Mammary epithelial cell (primary cell): ENCODE measurements at regions of chr19 and their contacts with region 1.

Region 1: DNA sequence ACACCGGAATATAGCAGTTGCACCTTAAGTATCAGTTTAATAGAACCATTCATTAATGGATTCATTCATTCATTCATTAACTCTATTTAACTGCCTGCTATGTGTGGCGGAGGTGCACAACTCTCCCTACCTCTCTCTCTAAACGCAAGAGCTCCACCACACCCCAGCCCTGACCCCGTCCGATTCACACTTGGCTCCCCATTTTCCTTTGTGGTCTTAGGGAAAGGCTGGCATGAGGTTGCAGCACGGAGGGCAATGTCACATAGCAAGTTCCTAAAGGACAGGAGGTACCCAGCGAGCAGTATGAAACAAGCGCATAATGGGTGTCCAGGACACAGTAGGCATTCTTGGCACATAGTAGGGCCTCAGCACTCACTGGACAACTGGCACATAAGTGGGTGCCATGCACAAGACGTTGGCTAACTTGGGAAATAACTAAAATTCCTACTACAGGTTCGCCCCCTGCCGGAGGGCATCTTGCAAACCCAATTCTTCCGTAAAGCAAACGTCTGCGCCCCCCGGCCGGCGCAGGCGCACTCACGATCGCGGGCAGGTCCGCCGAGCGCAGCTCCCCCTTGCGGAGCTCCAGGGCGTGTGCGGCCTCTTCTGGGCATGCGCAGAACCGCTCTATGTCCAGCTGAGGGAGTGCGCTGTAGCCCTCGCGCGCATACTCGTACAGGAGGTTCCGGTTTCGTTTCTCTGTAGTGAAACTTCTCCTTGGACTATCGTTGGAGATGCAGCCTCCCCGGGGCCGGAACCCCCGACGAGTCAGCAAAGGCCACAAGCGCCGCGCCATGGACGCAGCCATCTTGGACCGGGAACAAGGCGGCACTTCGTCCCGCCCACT is at the start of gene SARS2:
- DNase-seq: peak; percentile 84
- H3K4me3 ChIP-seq: peak within 1 kb of the TSS; percentile 84 to 90 (median 86)
- H3K27ac ChIP-seq: peak within 1 kb of the TSS; percentile 82
- H3K4me1 ChIP-seq: peaks cover 12% of the 10 kb centered on the region
- H3K27me3 ChIP-seq: no peaks in the 10 kb centered on the region
- CTCF ChIP-seq: peak; percentile 88 to 96
- total RNA-seq, gene SARS2: 18.0 to 28.0 TPM

Region 2: DNA sequence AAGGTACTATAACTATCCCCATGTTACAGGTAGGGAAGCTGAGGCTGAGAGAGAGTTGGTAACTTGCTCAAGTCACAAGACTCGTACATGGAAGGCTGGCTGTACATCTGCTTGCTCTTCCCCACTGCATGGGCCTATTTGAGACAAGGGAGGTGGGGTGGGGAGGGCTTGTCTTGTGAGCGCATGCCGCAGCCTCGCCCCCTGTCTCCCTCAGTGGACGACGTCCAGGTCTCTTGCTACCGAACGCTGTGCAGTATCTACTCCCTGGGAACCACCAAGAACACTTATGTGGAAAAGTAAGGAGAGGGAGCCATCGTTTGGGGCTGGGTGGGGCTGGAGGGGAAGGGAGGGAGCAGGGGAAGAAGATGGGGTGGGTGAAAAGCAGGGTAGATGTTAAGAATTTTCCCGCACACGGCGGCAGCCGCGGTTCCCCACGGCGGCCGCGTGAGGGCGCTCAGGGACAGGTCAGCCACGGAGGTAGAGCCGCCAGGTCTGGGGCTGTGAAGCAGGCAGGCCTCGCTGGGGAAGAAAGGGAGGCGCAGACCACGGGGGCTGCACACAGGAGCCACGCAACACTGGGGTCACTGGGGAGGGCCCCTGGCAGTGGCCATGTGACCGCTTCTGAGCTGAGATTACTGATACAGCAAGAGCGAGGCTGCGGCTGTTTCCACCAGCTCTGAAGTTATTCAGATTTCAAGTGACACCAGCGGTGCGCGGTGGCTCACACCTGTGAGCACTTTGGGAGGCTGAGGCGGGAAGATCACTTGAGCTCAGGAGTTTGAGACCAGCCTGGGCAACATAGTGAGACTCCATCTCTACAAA is 415.1 kb before region 1 on chr19:
- CTCF ChIA-PET with region 1: no interaction called
- dilution Hi-C with region 1: no loop called
- in situ Hi-C with region 1: loop called in 1 of 2 experiments (anchors 25 kb)
- intact Hi-C with region 1: loop called (anchors 1 kb)
- DNase-seq: peak; percentile 45
- H3K4me3 ChIP-seq: peak overlapping the region in 1 of 3 experiments; percentile 4
- H3K27ac ChIP-seq: no peak overlapping the region
- H3K4me1 ChIP-seq: no peaks in the 10 kb centered on the region
- H3K27me3 ChIP-seq: no peaks in the 10 kb centered on the region
- CTCF ChIP-seq: peak; percentile 62 to 90

Region 3: DNA sequence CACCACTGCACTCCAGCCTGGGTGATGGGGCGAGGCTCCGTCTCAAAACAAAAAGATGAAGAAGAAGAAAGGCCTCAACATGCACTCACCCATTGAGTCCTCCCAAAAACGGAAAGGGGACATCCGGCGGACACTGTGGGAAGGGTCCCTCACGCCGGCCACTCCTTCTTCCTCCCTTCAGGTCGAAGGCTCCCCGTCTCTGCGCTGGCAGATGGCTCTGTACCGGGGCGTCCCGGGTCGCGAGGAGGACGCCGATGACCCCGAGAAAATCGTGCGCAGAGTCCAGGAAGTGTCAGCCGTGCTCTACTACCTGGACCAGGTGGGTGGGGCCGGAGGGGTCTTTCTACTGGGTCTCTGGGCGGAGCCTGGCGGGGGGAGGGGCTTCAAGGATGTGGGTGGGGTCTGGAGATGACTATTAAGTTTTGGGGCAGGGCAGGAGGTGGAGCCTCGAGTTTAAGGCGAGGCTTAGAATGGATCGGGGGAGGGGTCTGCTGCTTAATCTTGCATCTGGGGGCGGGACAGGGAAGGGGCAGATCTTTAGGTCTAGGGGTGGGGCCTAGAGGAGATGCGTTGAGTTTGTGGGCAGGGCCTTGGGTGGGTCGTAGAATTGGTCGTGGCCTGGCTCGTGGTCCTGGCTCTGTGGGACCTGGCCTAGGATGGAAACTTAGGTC is 402.6 kb before region 1 on chr19:
- CTCF ChIA-PET with region 1: no interaction called
- dilution Hi-C with region 1: loop called (anchors 5 kb)
- in situ Hi-C with region 1: loop called in 1 of 2 experiments (anchors 25 kb)
- intact Hi-C with region 1: no loop called
- DNase-seq: no peak
- H3K4me3 ChIP-seq: no peak overlapping the region
- H3K27ac ChIP-seq: no peak overlapping the region
- H3K4me1 ChIP-seq: no peaks in the 10 kb centered on the region
- H3K27me3 ChIP-seq: no peaks in the 10 kb centered on the region
- CTCF ChIP-seq: no peak

Region 4: GRCh38 chr19:38718747-38719543 is 211.2 kb before region 1 on chr19:
- CTCF ChIA-PET with region 1: no interaction called
- dilution Hi-C with region 1: no loop called
- in situ Hi-C with region 1: no loop called
- intact Hi-C with region 1: loop called (anchors 5 kb)
- DNase-seq: peak; percentile 68
- H3K4me3 ChIP-seq: no peak overlapping the region
- H3K27ac ChIP-seq: peak overlapping the region; percentile 86
- H3K4me1 ChIP-seq: peaks cover 43% of the 10 kb centered on the region
- H3K27me3 ChIP-seq: no peaks in the 10 kb centered on the region
- CTCF ChIP-seq: peak; percentile 27 to 61

Region 5: DNA sequence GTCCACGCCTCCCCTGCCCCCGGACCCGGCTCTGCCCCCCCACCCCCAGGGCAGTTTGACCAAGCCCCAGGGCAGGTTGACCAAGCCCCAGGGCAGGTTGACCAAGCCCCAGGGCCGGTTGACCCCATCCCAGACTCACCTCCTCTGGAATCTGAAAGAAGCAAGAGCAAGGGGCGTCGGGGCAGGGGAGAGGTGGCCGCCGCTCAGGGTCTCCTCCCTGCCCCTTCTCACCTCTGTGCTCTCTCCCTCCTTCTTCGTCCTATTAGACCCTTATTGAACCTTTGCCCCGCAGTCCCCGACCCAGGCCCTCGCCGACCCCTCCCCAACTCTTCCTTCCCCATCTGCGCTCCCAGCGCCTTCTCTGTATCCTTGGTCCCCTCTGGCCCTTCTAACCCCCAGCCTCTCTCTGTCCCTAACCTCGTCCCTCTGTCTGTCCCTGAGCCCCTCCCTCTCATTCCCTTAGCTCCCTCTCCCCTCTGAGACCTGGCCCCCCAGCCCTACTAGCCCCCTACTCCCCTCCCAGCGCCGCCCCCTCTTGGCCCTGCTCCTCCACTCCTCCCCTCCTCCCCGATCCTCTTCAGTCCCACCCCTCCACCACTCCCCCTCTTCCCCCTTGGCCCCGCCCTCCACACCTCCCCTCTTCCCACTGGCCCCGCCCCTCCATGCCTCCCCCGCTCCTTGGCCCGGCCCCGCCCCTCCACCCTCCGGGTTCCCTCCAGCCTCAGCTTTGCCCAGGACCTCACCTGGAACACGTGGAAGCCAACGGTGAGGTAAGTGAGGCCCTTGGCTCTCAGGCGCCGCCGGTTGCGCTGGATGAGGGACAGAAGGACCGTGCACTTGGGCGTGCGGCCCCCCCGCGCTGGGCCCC is 193.5 kb before region 1 on chr19:
- CTCF ChIA-PET with region 1: no interaction called
- dilution Hi-C with region 1: no loop called
- in situ Hi-C with region 1: no loop called
- intact Hi-C with region 1: loop called (anchors 2 kb)
- DNase-seq: peak; percentile 36
- H3K4me3 ChIP-seq: peak overlapping the region in 1 of 3 experiments; percentile 41
- H3K27ac ChIP-seq: no peak overlapping the region
- H3K4me1 ChIP-seq: peaks cover 33% of the 10 kb centered on the region
- H3K27me3 ChIP-seq: no peaks in the 10 kb centered on the region
- CTCF ChIP-seq: no peak

Region 6: DNA sequence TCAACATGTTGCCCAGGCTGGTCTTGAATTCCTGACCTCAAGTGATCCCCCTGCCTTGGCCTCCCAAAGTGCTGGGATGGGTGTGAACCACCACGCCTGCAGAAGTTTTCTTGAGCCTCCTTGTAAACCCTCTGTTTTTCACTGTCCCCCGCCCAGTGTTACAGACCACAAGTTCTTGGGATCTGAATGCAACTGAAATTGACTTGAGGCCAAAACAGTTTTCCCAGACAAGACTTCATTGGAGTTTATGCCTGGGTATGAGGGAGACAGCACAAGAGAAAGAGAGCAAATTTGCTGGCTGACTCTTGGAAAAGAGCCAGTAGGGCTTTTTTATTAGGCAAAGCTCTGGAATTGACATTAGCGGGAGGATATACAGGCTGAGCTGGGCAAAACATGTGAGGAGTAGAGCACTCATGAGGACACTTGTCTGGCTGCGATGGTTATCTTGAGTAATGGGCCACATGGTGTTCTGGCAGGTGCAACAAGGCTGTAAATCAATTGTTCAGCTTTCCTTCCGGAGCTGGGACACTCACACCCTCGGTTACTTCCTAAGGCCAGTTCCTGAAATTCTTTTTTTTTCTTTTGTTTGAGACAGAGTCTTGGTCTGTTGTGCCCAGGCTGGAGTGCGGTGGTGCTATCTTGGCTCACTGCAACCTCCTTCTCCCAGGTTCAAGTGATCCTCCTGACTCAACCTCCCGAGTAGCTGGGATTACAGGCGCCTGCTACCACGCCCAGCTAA is 67.7 kb before region 1 on chr19:
- CTCF ChIA-PET with region 1: no interaction called
- dilution Hi-C with region 1: no loop called
- in situ Hi-C with region 1: no loop called
- intact Hi-C with region 1: no loop called
- DNase-seq: no peak
- H3K4me3 ChIP-seq: no peak overlapping the region
- H3K27ac ChIP-seq: no peak overlapping the region
- H3K4me1 ChIP-seq: no peaks in the 10 kb centered on the region
- H3K27me3 ChIP-seq: no peaks in the 10 kb centered on the region
- CTCF ChIP-seq: no peak

Region 7: DNA sequence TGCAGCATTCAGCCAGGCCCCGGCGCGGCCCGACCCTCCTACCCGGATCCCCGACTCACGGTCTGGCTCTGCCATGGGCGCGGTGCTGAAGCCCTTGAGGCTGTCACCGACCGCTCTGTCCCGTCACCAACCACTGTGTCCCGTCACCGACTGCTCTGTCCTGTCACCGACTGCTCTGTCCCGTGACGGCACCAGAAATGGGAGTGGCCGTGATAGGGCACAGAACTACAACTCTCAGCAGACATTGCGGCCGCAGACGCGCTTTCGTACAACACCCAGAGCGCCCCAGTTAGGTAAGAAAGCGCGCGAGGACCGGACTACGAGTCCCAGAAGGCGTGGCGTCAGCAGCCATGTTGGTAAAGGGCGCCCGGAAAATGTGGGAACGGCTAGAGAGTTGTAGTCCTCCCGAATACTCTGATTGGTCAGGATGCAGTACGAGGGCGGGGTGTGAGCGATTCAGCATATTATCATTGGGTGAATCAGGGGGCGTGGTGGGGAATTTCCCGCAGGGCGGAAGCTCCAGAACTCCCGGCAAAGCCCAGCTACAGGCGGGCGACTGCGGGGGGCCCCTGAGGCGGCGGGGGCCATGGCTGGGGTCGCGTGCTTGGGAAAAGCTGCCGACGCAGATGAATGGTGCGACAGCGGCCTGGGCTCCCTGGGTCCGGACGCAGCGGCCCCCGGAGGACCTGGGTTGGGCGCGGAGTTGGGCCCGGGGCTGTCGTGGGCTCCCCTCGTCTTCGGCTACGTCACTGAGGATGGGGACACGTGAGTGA is 30.5 kb before region 1 on chr19 and contains the starts of genes NFKBIB and SIRT2:
- CTCF ChIA-PET with region 1: interaction called, 3 read pairs
- dilution Hi-C with region 1: no loop called
- in situ Hi-C with region 1: no loop called
- intact Hi-C with region 1: loop called (anchors 1 kb)
- DNase-seq: peak; percentile 100
- H3K4me3 ChIP-seq: peak within 1 kb of the TSS; percentile 84 to 93 (median 93)
- H3K27ac ChIP-seq: peak within 1 kb of the TSS; percentile 96
- H3K4me1 ChIP-seq: peaks cover 13% of the 10 kb centered on the region
- H3K27me3 ChIP-seq: no peaks in the 10 kb centered on the region
- CTCF ChIP-seq: no peak
- total RNA-seq, gene NFKBIB: 9.5 to 27.2 TPM
- total RNA-seq, gene SIRT2: 43.3 to 65.3 TPM

Region 8: DNA sequence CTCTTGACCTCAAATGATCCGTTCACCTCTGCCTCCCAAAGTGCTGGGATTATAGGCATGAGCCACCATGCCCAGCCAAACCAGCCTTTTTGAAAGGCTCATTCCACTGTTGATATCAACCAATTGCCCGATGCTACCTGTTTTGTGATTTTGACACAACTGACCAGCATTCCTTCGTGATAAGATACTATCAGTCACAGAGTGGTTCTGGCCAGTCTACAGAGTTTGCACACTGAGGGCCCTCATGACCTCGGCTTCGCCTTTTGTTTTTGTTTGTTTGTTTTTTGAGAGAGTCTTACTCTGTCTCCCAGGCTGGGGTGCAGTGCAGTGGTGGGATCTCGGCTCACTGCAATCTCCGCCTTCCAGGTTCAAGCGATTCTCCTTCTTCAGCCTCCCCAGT is 64.5 kb after region 1 on chr19:
- CTCF ChIA-PET with region 1: no interaction called
- dilution Hi-C with region 1: loop called (anchors 5 kb)
- in situ Hi-C with region 1: no loop called
- intact Hi-C with region 1: no loop called
- DNase-seq: no peak
- H3K4me3 ChIP-seq: no peak overlapping the region
- H3K27ac ChIP-seq: no peak overlapping the region
- H3K4me1 ChIP-seq: peaks cover 25% of the 10 kb centered on the region
- H3K27me3 ChIP-seq: no peaks in the 10 kb centered on the region
- CTCF ChIP-seq: no peak

Region 9: GRCh38 chr19:39078436-39079200 is 148.5 kb after region 1 on chr19:
- CTCF ChIA-PET with region 1: no interaction called
- dilution Hi-C with region 1: no loop called
- in situ Hi-C with region 1: no loop called
- intact Hi-C with region 1: no loop called
- DNase-seq: peak; percentile 98
- H3K4me3 ChIP-seq: no peak overlapping the region
- H3K27ac ChIP-seq: peak overlapping the region; percentile 87
- H3K4me1 ChIP-seq: peaks cover 40% of the 10 kb centered on the region
- H3K27me3 ChIP-seq: no peaks in the 10 kb centered on the region
- CTCF ChIP-seq: no peak